ENCODE measurements at regions of chr18 and their contacts with region 1.

Region 1: GRCh38 chr18:24016643-24017042 is 2.1 kb downstream of the TTC39C start:
- H3K4me3 ChIP-seq: no peak overlapping the region
- H3K27ac ChIP-seq: no peak overlapping the region
- H3K4me1 ChIP-seq: peaks cover 4% of the 10 kb centered on the region
- CTCF ChIP-seq: no peak

Region 2: DNA sequence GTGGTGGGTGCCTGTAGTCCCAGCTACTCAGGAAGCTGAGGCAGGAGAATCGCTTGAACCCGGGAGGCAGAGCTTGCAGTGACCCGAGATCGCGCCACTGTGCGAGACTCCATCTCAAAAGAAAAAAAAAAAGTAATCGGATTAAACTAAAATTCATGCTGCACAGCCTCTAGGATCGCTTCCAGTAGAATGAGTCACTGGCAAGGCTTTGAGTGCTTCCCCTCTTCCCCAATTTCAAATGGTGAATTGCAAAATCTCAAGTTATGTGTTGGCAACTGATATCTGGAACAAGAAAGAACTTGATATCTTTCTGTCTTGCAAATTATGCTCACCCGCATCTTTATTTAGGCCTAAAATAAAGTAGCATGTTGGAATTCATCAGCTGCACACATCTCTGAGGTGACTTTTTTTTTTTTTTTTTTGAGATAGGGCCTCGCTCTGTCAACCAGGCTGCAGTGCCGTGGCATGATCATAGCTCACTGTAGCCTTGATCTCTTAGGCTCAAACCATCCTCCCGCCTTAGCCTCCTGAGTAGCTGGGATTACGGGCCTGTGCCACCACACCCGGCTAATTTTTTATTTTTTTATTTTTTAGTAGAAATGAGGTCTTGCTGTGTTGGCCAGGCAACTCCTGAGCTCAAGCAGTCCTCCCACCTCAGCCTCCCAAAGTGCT is 10.6 kb after region 1 on chr18:
- CTCF ChIA-PET with region 1: interaction called, 11 read pairs
- POLR2A ChIA-PET with region 1: no interaction called
- H3K4me3 ChIP-seq: no peak overlapping the region
- H3K27ac ChIP-seq: no peak overlapping the region
- H3K4me1 ChIP-seq: peaks cover 4% of the 10 kb centered on the region
- CTCF ChIP-seq: no peak